Sigmoid colon (tissue), 7 donors: ENCODE measurements at regions of chr10 and their contacts with region 1.

Region 1: DNA sequence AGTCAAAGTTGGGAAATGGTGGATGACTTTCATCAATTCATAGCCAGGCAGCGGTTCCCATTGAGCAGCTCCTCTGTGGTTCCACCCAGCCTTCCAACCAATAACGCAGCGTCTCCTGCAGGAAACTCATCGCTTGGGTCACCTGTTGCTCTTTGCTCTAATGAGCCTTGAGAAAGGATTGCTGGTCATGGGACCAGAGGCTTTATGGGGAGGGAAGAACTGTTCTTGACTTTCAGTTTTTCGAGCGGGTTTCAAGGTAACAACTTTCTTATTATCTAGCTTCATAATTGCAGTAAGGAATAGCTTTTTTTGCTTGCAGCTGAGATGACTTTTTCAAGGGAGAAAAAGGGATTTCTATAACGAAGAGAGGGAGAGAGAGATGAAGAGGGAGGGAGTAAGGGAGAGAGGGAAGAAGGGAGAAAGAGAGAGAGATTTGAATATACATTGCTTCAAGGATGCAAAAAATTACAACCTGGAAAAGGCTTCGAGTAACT is 405 bp upstream of the ENTPD1 start:
- DNase-seq: peak; percentile 78
- H3K4me3 ChIP-seq: peak overlapping the region; percentile 18 to 51 (median 42)
- H3K27ac ChIP-seq: peak overlapping the region; percentile 64 to 86 (median 77)
- H3K4me1 ChIP-seq: peaks cover 0 to 36% (median 33%) of the 10 kb centered on the region in 4 donors
- H3K27me3 ChIP-seq: no peaks in the 10 kb centered on the region
- CTCF ChIP-seq: no peak
- EP300 ChIP-seq: no peak
- POLR2A ChIP-seq: peak in 1 of 2 donors; percentile 25

Region 2: DNA sequence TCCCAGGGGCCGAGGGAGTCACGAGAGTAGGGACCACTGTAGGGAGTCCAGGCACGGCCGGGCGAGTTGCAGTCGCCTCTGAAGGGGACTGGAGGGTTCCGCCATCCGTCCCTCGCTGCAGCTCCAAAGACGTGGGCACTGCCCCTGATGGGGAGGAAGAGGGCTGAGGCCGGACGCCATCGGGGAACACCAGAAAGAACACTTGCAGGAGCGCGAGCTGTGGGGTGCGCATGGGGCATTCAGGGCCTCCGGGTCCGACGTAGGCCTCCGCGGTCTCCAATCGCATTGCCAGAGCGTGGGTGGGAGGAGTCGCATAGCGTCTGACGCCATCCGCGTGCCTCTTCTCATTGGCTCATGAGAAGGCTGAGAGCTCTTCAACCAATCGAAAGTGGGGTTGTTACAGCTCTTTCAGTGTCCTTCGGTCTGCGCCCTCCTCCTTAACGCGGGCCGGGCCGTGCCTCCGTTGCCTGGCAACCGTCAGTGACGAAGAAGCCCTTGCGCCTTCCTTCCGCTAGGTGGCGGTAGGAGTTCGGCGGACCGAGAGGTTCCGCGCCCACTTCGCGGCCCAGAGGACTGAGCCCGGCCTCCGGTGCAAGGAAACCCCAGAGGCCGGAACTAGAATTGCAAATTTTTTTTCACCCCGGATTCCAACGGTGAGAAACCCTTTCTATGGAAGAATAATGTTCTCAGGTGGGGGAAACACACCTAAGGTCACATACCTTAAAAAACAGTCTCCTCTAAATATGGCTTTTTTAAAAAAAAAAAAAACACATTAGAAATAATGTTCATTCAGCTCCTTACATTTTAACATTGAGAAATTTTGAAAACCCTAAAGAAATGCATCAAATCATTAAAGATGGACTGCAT is 61.7 kb before region 1 on chr10 and contains the start of gene TCTN3:
- intact Hi-C with region 1: no loop called
- DNase-seq: peak; percentile 99
- H3K4me3 ChIP-seq: peak within 1 kb of the TSS; percentile 61 to 81 (median 65)
- H3K27ac ChIP-seq: peak within 1 kb of the TSS; percentile 82 to 86 (median 85)
- H3K4me1 ChIP-seq: peaks cover 0 to 17% (median 15%) of the 10 kb centered on the region in 4 donors
- H3K27me3 ChIP-seq: no peaks in the 10 kb centered on the region
- CTCF ChIP-seq: peak; percentile 98 to 100 (median 99)
- EP300 ChIP-seq: no peak
- POLR2A ChIP-seq: peak; percentile 74 to 75
- total RNA-seq, gene TCTN3: 13.2 to 20.5 (median 16.7) TPM

Region 3: DNA sequence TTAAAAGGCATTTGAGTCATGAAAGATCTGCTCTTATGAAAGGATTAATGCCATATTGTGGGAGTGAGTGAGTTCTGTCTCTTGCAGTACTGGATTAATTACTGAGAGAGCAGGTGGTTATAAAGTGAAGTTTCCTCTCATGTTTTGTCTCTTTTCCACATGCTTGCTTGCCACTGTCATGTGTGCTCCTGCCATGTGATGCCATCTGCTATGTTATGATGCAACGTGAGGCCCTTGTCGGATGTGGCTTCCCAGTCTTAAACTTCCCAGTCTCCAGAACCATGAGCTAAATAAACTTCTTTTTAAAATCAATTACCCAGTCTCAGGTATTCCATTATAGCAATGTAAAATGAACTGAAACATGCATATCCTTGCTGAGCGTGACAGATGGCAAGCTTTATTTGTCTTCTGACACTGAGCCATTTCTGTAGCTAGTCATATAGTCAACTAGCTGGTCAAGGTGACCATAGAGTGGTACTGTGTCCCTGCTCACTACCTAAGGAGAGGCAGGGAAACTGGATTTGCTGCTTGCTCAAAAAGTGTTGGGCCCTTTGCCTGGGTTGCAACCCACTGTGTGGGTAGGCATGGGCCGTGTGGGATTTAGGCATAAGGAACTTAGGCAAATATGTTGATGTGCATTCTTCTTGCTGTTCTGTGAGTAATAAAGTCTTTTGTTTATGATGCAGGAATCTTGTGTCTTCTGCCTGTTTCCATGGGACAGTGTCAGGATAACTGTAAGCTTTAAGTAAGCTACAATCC is 38.9 kb before region 1 on chr10:
- intact Hi-C with region 1: no loop called
- DNase-seq: no peak
- H3K4me3 ChIP-seq: no peak overlapping the region
- H3K27ac ChIP-seq: no peak overlapping the region
- H3K4me1 ChIP-seq: peaks cover 0 to 5% (median 0%) of the 10 kb centered on the region in 4 donors
- H3K27me3 ChIP-seq: no peaks in the 10 kb centered on the region
- CTCF ChIP-seq: no peak
- EP300 ChIP-seq: no peak
- POLR2A ChIP-seq: no peak

Region 4: DNA sequence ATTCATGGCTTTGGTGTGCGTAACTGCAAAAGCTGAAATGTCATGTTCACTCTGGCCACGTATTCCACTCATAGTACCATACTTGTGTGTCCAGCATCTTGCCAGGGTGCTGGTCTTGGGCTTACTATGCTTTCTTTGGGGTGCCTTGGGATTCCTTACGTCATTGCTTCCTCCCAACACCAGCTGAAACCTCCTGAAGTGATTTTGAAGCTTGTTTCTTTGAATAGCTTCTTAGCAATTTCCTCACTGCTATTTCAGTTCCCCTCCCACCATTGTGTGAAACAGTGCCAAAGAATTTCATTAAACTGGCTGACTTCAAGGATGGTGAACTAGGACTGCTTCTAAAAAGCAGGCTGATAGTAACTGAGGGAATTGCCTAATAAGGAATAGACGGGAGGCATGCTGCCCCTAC is 37.3 kb after region 1 on chr10:
- intact Hi-C with region 1: loop called (anchors 5 kb)
- DNase-seq: no peak
- H3K4me3 ChIP-seq: no peak overlapping the region
- H3K27ac ChIP-seq: peak overlapping the region; percentile 21 to 68 (median 62)
- H3K4me1 ChIP-seq: peaks cover 0 to 52% (median 21%) of the 10 kb centered on the region in 4 donors
- H3K27me3 ChIP-seq: no peaks in the 10 kb centered on the region
- CTCF ChIP-seq: no peak
- EP300 ChIP-seq: no peak
- POLR2A ChIP-seq: no peak

Region 5: GRCh38 chr10:95841661-95842498 is 86.3 kb after region 1 on chr10:
- intact Hi-C with region 1: loop called (anchors 5 kb)
- DNase-seq: no peak
- H3K4me3 ChIP-seq: no peak overlapping the region
- H3K27ac ChIP-seq: peak overlapping the region in 3 of 4 donors; percentile 42 to 79 (median 60)
- H3K4me1 ChIP-seq: peaks cover 0 to 31% (median 15%) of the 10 kb centered on the region in 4 donors
- H3K27me3 ChIP-seq: no peaks in the 10 kb centered on the region
- CTCF ChIP-seq: peak; percentile 52 to 64 (median 58)
- EP300 ChIP-seq: no peak
- POLR2A ChIP-seq: no peak

Region 6: DNA sequence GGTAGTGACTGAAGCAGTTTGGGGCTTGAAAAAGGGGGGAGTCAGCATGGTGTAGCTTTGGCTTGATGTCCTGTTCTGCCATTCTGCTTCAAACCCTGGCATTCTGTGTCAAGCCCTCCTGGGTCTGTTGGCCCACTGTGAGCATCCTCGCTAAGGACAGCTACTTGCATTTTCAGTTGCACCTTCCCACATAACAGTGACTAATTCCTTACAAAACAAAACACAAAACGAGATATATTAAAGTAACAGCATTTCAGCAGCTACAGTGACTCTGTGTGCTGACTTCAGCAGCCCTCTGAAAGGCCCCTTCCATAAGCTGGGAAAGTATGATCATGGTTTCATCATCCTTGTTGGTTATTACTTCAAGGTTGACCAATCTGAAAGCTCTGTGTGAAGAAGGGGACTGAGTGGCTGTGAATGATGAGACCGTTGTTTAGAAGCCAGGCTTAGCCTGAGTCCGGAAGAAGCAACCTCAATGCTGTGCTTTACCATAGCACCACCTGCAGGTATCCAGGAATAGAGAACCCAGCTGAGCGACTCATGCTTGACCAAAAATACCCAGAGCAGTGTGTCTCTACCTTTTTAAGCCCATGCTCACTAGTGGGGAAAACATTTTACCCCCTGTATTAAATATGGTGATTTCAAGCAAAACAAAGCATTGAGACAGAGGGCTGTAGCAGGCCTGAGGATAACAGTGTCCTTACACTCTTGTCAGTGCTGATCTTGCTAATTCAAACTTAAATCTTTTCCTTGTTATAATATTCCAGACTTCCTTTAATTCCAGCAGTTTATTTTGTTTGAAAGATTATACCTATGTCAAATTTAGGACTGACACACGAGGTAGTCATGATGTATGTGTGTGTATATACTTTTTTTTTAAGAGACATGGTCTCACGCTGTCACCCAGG is 109.6 kb after region 1 on chr10:
- intact Hi-C with region 1: no loop called
- DNase-seq: no peak
- H3K4me3 ChIP-seq: no peak overlapping the region
- H3K27ac ChIP-seq: peak overlapping the region; percentile 5 to 32 (median 24)
- H3K4me1 ChIP-seq: peaks cover 0 to 17% (median 8%) of the 10 kb centered on the region in 4 donors
- H3K27me3 ChIP-seq: no peaks in the 10 kb centered on the region
- CTCF ChIP-seq: peak; percentile 27 to 54 (median 40)
- EP300 ChIP-seq: no peak
- POLR2A ChIP-seq: no peak

Region 7: GRCh38 chr10:96448021-96448457 is 692.5 kb after region 1 on chr10:
- intact Hi-C with region 1: no loop called
- DNase-seq: peak; percentile 74
- H3K4me3 ChIP-seq: no peak overlapping the region
- H3K27ac ChIP-seq: no peak overlapping the region
- H3K4me1 ChIP-seq: no peaks in the 10 kb centered on the region
- H3K27me3 ChIP-seq: no peaks in the 10 kb centered on the region
- CTCF ChIP-seq: no peak
- EP300 ChIP-seq: no peak
- POLR2A ChIP-seq: no peak